ENCODE measurements at regions of chr7 and their contacts with region 1.

Region 1: DNA sequence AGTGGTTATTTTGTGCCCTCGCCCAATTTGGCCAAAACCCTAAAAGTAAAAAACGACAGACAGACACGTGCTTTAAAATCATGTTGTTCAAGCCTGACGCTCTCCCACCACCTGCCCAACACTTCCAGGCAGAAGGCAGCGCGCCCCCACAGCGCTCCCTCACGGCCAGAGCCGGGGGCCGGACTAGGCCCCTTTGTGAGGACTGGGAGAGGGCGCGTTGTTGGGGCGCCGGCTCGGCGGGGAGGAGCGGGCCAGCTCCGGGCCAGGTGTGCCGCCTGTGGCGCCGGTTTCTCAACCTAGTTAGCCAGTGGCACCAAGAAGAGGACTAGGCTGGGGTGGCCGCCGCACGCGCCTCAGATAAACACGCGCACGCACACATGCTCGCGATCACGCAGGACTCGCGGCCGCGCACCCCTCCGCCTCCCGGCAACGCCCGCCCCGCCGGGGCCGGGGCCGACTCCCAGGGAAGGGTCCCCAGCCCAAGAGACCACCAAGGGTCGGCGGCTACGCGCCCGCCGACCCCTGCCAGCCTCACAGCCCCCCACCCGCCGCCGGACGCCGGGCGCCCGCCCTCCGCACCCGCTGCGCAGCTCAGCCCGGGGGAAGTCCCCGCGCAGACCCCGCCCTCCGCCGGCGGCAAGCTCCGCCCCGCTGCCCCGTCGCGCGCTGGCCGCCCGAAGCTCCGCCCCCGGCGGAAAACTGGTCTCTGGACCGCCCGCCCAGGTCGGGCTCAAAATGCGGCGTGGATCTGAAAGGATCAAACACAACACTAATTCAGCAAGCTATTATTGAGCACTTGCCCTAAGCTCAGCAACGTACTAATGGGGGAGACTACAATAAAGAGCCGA is at the start of gene IMMP2L:
- DNase-seq: peak; percentile 87
- ATAC-seq: peak; percentile 89
- H3K4me3 ChIP-seq: peak within 1 kb of the TSS; percentile 81
- H3K27ac ChIP-seq: peak within 1 kb of the TSS; percentile 84
- H3K4me1 ChIP-seq: peaks cover 42% of the 10 kb centered on the region
- H3K27me3 ChIP-seq: no peaks in the 10 kb centered on the region
- CTCF ChIP-seq: peak; percentile 44; the same call in 1 of the 2 replicates
- total RNA-seq, gene IMMP2L: 8.6 and 15.4 TPM in 2 replicates

Region 2: DNA sequence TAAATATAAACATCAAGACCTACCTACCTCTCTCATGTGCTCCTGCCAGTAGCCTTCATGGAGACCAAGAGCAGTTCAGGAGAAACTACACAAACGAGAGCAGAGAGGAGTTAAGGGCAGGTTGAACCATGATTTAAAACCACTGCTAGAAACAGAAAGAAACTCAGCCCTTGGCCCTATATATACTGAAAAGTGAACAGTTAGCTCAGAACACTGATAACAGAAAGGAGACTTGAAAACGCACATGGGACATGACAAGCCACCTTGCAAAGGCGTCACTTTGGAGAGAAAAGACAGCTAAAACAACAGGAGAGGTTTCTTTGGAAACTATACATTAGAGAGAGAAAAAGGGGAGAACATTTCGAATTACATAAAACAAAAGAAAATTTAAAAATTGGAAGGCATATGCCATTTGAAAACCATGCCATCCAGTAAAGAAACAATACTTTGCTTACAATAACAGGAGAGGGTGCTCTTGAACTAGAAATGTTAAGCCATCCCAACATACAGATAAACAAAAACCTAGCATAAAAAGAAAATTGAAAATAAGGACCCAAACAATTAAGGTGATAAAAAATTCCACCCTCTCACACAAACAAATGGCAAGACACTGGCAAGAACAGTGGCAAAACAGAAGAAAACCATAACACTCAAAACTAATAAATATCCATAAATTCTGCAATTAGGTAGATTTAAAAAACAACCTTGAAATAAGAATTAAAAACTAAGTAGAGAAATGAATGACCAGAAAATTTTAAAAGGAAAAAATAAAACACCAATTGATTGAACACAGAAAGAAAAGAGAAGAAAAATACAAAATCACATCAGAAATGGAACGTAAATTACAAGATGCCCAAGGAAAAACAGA is 232.5 kb before region 1 on chr7:
- CTCF ChIA-PET with region 1: no interaction called
- POLR2A ChIA-PET with region 1: no interaction called
- intact Hi-C with region 1: loop called (anchors 5 kb)
- DNase-seq: peak; percentile 21
- ATAC-seq: peak; percentile 69
- H3K4me3 ChIP-seq: no peak overlapping the region
- H3K27ac ChIP-seq: no peak overlapping the region
- H3K4me1 ChIP-seq: 0 out of 2 replicates have a peak, but pooled peaks cover 4% of the 10 kb centered on the region
- H3K27me3 ChIP-seq: no peaks in the 10 kb centered on the region
- CTCF ChIP-seq: peak; percentile 55

Region 3: GRCh38 chr7:111499037-111499655 is 63.0 kb before region 1 on chr7:
- CTCF ChIA-PET with region 1: interaction called, 4 read pairs
- POLR2A ChIA-PET with region 1: interaction called, 8 read pairs
- intact Hi-C with region 1: loop called (anchors 1 kb)
- DNase-seq: peak; percentile 98
- ATAC-seq: peak; percentile 91
- H3K4me3 ChIP-seq: peak overlapping the region; percentile 8; the same call in 1 of the 2 replicates
- H3K27ac ChIP-seq: peak overlapping the region; percentile 98
- H3K4me1 ChIP-seq: peaks cover 26% of the 10 kb centered on the region
- H3K27me3 ChIP-seq: no peaks in the 10 kb centered on the region
- CTCF ChIP-seq: no peak

Region 4: GRCh38 chr7:111517549-111517951 is 44.6 kb before region 1 on chr7:
- CTCF ChIA-PET with region 1: no interaction called
- POLR2A ChIA-PET with region 1: no interaction called
- intact Hi-C with region 1: loop called (anchors 5 kb)
- DNase-seq: peak; percentile 88
- ATAC-seq: peak; percentile 64
- H3K4me3 ChIP-seq: peak overlapping the region; percentile 24; the same call in 1 of the 2 replicates
- H3K27ac ChIP-seq: peak overlapping the region; percentile 100
- H3K4me1 ChIP-seq: peaks cover 28% of the 10 kb centered on the region
- H3K27me3 ChIP-seq: no peaks in the 10 kb centered on the region
- CTCF ChIP-seq: no peak

Region 5: GRCh38 chr7:112327566-112327965 is 765.5 kb after region 1 on chr7:
- CTCF ChIA-PET with region 1: no interaction called
- POLR2A ChIA-PET with region 1: no interaction called
- intact Hi-C with region 1: no loop called
- DNase-seq: no peak
- ATAC-seq: no peak
- H3K4me3 ChIP-seq: no peak overlapping the region
- H3K27ac ChIP-seq: no peak overlapping the region
- H3K4me1 ChIP-seq: no peaks in the 10 kb centered on the region
- H3K27me3 ChIP-seq: no peaks in the 10 kb centered on the region
- CTCF ChIP-seq: no peak